ENCODE measurements at regions of chr10 and their contacts with region 1.

Region 1: GRCh38 chr10:120897343-120897742 is 46.2 kb downstream of the WDR11 start:
- DNase-seq: peak; percentile 5
- ATAC-seq: no peak
- H3K4me3 ChIP-seq: no peak overlapping the region
- H3K27ac ChIP-seq: no peak overlapping the region
- H3K4me1 ChIP-seq: no peaks in the 10 kb centered on the region
- H3K27me3 ChIP-seq: no peaks in the 10 kb centered on the region
- CTCF ChIP-seq: no peak
- POLR2A ChIP-seq: no peak
- RAD21 ChIP-seq: no peak

Region 2: DNA sequence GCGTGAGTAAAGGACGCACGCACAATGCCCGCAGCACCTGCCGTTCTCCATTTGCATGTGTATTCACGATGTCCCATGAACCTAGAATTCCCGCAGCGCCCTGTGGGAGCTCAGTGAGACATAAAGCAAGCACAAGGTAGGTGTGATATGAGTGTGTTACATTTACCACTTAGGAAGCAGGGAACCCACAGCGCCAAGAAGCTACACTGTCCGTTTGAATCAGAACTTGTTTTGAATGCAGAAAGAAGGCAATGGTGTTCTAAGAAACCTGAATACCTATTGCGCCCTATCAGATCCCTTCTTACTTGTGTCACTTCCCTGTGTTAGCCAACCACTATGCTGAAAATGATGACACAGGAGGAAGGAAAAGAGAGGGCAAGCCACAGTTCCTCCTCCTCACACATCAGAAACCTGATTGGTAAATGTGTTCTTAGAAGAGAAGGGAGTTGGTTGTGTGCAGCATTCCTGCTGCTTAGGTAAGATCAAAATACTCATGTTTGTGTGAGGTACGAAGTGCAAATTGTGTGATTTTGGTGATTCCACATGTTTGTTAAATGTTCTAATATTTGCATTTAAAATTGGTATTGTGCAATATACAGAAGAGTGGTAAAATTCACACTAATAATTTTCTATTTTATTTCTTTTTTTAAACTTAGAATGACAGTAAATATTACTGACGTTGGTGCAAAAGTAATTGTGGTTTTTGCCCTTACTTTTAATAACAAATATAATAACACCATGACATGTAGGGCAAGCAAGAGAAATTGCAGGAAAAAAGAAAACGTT is 819.4 kb before region 1 on chr10:
- CTCF ChIA-PET with region 1: no interaction called
- POLR2A ChIA-PET with region 1: no interaction called
- dilution Hi-C with region 1: no loop called
- in situ Hi-C with region 1: no loop called
- intact Hi-C with region 1: no loop called
- DNase-seq: no peak
- ATAC-seq: no peak
- H3K4me3 ChIP-seq: no peak overlapping the region
- H3K27ac ChIP-seq: no peak overlapping the region
- H3K4me1 ChIP-seq: no peaks in the 10 kb centered on the region
- H3K27me3 ChIP-seq: no peaks in the 10 kb centered on the region
- CTCF ChIP-seq: no peak
- POLR2A ChIP-seq: no peak
- RAD21 ChIP-seq: no peak

Region 3: DNA sequence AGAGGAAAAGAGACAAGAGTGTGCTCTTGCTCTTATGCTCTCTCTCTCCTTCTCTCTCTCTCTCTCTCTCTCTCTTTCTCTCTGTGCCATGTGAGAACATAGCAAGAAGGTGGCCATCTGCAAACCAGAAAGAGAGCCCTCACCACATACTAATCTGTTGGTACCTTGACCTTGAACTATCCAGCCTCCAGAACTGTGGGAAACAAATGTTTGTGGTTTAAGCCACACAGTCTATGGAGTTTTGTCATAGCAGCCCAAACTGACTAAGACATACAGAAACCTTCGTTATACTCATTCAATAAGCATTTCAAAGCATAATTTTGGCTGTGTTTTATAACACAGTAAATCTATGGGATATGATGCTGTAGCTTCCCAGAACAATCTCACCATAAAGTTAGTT is 496.7 kb before region 1 on chr10:
- CTCF ChIA-PET with region 1: no interaction called
- POLR2A ChIA-PET with region 1: no interaction called
- dilution Hi-C with region 1: no loop called
- in situ Hi-C with region 1: no loop called
- intact Hi-C with region 1: no loop called
- DNase-seq: no peak
- ATAC-seq: no peak
- H3K4me3 ChIP-seq: no peak overlapping the region
- H3K27ac ChIP-seq: no peak overlapping the region
- H3K4me1 ChIP-seq: no peaks in the 10 kb centered on the region
- H3K27me3 ChIP-seq: no peaks in the 10 kb centered on the region
- CTCF ChIP-seq: no peak
- POLR2A ChIP-seq: no peak
- RAD21 ChIP-seq: no peak

Region 4: DNA sequence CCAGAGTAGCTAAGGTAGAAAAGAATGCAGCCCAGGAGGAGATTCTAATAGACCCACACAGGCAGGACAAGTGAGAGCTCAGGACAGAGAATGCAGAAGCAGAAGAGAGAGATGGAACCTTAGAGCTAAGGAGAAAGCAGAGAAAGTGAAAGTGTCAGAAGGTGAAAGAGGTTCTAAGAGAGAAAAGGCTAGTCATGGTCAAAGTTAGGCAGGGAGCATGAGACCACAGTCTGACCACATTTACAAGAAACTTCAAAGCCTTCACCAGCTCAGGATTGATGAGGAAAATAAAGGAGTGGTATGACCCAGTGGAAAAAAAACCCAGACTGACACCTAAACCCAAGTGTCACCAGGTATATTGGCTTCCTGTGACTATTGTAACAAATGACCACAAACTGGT is 178.0 kb before region 1 on chr10:
- CTCF ChIA-PET with region 1: no interaction called
- POLR2A ChIA-PET with region 1: no interaction called
- dilution Hi-C with region 1: no loop called
- in situ Hi-C with region 1: no loop called
- intact Hi-C with region 1: no loop called
- DNase-seq: no peak
- ATAC-seq: no peak
- H3K4me3 ChIP-seq: no peak overlapping the region
- H3K27ac ChIP-seq: no peak overlapping the region
- H3K4me1 ChIP-seq: no peaks in the 10 kb centered on the region
- H3K27me3 ChIP-seq: no peaks in the 10 kb centered on the region
- CTCF ChIP-seq: no peak
- POLR2A ChIP-seq: no peak
- RAD21 ChIP-seq: no peak

Region 5: GRCh38 chr10:120827251-120827875 is 70.0 kb before region 1 on chr10:
- CTCF ChIA-PET with region 1: no interaction called
- POLR2A ChIA-PET with region 1: no interaction called
- dilution Hi-C with region 1: no loop called
- in situ Hi-C with region 1: no loop called
- intact Hi-C with region 1: no loop called
- DNase-seq: no peak
- ATAC-seq: no peak
- H3K4me3 ChIP-seq: no peak overlapping the region
- H3K27ac ChIP-seq: no peak overlapping the region
- H3K4me1 ChIP-seq: no peaks in the 10 kb centered on the region
- H3K27me3 ChIP-seq: no peaks in the 10 kb centered on the region
- CTCF ChIP-seq: no peak
- POLR2A ChIP-seq: no peak
- RAD21 ChIP-seq: no peak

Region 6: DNA sequence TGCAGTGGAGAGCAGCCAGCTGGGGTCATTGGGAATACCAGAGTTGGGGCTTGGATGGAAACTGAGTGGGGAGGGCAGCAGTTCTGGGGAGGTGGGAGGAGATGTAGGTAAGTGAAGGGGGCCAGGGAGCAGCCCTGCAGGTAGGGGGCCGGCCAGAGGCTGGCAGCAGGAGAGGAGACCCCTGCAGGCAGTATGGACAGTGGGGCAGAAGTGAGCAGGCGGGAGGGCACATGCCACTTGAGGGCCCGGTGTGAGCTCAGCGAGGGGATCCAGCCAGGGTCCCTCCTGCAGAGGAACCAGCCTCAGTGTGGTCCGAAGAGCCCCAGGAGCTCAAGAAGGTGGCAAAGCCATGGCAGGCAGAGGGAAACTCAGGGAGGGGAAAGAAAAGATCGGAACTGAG is 29.3 kb after region 1 on chr10:
- CTCF ChIA-PET with region 1: no interaction called
- POLR2A ChIA-PET with region 1: no interaction called
- dilution Hi-C with region 1: no loop called
- in situ Hi-C with region 1: no loop called
- intact Hi-C with region 1: loop called (anchors 2 kb)
- DNase-seq: no peak
- ATAC-seq: no peak
- H3K4me3 ChIP-seq: no peak overlapping the region
- H3K27ac ChIP-seq: no peak overlapping the region
- H3K4me1 ChIP-seq: no peaks in the 10 kb centered on the region
- H3K27me3 ChIP-seq: no peaks in the 10 kb centered on the region
- CTCF ChIP-seq: no peak
- POLR2A ChIP-seq: no peak
- RAD21 ChIP-seq: no peak